H1 (cell line): ENCODE measurements at regions of chr5 and their contacts with region 1.

Region 1: DNA sequence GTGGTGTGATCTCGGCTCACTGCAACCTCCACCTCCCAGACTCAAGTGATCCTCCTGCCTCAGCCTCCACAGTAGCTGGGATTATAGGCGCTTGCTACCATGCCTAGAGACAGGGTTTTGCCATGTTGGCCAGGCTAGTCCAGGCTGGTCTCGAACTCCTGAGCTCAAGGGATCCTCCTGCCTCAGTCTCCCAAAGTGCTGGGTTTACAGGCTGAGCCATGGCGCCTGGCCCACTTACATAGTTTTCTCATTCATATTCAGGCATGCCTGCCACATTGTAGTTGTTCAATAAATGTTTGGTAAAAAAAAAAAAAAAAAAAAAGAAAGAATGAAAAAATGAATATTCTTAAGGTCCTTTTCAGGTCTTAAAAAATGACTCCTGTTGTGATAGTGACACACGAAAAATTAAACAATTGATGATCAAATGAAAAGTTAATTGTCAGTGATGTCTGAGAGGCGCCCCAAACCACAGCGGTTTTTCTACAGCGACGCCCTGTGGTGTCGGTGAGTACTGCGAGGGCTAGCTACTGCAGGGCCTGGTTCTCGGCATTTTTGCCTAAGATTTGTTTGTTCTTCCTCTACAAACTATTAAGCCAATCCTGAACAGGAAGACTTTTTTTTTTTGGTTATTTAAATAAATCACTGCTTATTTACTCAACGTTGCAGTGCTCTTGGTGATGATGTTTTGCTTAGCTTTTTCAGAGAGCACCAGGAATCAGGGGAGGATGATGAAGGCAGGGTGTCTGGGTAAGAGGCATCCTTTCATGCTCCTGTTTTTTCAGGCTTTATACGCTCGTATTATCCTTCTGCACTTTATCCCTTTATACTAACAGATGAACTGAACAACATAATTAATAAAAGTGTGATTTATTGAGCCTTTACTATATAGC is 67.0 kb upstream of the DPYSL3 start:
- DNase-seq: peak in 1 of 2 experiments; percentile 91
- H3K4me3 ChIP-seq: no peak overlapping the region
- H3K27ac ChIP-seq: no peak overlapping the region
- H3K4me1 ChIP-seq: peaks cover 12 to 21% (median 15%) of the 10 kb centered on the region in 4 experiments; a peak in 5 of 7 replicates
- H3K27me3 ChIP-seq: no peaks in the 10 kb centered on the region
- CTCF ChIP-seq: peak; percentile 87 to 90 (median 88)
- EP300 ChIP-seq: no peak
- POLR2A ChIP-seq: no peak
- RAD21 ChIP-seq: peak; percentile 69 to 77

Region 2: DNA sequence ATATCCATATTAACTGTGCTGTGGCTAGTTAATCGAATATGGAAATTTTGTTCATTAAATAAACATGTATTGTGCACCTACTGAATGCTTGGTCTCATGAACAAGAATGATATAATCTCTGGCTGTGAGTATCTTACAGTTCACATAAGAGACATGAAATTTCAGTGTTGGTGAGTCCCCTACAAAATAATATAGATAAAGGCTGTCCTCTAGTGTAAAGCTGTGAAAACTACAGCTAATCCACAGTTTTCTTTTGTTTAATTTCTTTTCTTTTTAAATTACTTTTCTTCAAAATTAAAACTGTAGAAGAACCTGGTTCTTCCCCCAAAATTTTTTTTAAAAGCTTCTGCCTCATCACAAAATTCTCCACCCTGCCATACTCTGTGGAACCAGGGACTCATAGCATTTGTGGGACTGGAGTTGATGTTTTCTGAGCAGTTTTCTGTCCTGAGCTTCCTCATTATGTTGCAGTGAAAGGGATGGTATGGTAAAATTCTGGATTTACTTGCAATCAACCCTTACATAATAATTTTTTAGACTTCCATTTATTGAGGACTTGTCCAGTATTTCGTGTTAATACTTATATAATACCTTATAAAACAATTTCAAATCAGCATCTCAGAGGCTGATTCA is 207.0 kb before region 1 on chr5:
- CTCF ChIA-PET with region 1: interaction called, 12 read pairs
- POLR2A ChIA-PET with region 1: no interaction called
- DNase-seq: no peak
- H3K4me3 ChIP-seq: no peak overlapping the region
- H3K27ac ChIP-seq: no peak overlapping the region
- H3K4me1 ChIP-seq: no peaks in the 10 kb centered on the region
- H3K27me3 ChIP-seq: no peaks in the 10 kb centered on the region
- CTCF ChIP-seq: peak in 2 of 3 experiments; percentile 49 to 51; a peak in 2 of 4 replicates
- EP300 ChIP-seq: no peak
- POLR2A ChIP-seq: no peak
- RAD21 ChIP-seq: peak; percentile 80 to 89

Region 3: GRCh38 chr5:147397616-147398015 is 179.3 kb before region 1 on chr5:
- CTCF ChIA-PET with region 1: interaction called, 10 read pairs
- POLR2A ChIA-PET with region 1: no interaction called
- DNase-seq: no peak
- H3K4me3 ChIP-seq: no peak overlapping the region
- H3K27ac ChIP-seq: no peak overlapping the region
- H3K4me1 ChIP-seq: no peaks in the 10 kb centered on the region
- H3K27me3 ChIP-seq: no peaks in the 10 kb centered on the region
- CTCF ChIP-seq: peak; percentile 28 to 61 (median 54)
- EP300 ChIP-seq: no peak
- POLR2A ChIP-seq: peak in 1 of 2 experiments; percentile 40; a peak in 1 of 3 replicates
- RAD21 ChIP-seq: peak; percentile 14 to 41; a peak in 2 of 4 replicates

Region 4: DNA sequence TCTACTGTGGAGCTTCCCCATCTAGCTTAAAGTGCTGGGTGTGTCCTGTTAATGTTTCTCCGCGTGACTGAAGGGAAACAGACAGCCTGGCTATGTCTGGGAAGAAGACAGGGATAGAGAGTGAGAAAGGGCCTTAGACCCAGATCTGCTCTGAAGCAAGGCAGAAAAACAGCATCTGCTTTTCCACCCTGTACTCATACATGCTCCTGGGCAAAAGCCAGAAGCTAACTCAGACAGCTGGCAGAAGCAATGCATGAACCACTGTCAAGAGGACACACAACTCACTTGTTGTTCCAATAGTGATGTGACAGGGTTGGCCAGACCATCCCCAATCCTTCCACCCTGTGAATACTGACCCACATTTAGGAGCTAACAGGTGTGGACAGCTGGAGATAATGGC is 130.4 kb before region 1 on chr5:
- CTCF ChIA-PET with region 1: interaction called, 23 read pairs
- POLR2A ChIA-PET with region 1: interaction called, 14 read pairs
- DNase-seq: no peak
- H3K4me3 ChIP-seq: no peak overlapping the region
- H3K27ac ChIP-seq: no peak overlapping the region
- H3K4me1 ChIP-seq: peaks cover 8 to 20% (median 19%) of the 10 kb centered on the region in 4 experiments; a peak in 6 of 7 replicates
- H3K27me3 ChIP-seq: no peaks in the 10 kb centered on the region
- CTCF ChIP-seq: no peak
- EP300 ChIP-seq: no peak
- POLR2A ChIP-seq: no peak
- RAD21 ChIP-seq: no peak

Region 5: DNA sequence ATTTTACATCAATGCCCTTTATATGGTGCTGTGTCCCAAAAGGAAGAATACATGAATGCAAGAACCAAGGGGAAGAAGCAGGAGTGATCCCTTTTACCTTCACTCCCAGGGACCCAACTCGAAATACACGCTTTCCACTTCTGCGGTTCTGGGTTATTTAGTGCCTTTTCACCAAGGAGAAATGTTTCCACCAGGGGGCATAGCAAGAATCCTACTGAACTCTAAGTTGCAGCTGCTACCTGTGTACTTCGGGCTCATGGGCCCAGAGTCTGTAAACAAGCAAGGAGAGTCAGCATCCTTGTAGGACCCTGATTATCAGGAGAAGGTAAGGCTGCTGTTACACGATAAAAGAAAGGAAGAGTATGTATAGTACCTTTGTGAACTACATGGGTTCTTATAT is 112.7 kb before region 1 on chr5:
- CTCF ChIA-PET with region 1: interaction called, 51 read pairs
- POLR2A ChIA-PET with region 1: interaction called, 5 read pairs
- DNase-seq: no peak
- H3K4me3 ChIP-seq: no peak overlapping the region
- H3K27ac ChIP-seq: no peak overlapping the region
- H3K4me1 ChIP-seq: peaks cover 3 to 24% (median 13%) of the 10 kb centered on the region in 4 experiments; a peak in 6 of 7 replicates
- H3K27me3 ChIP-seq: no peaks in the 10 kb centered on the region
- CTCF ChIP-seq: peak; percentile 7 to 81 (median 79)
- EP300 ChIP-seq: no peak
- POLR2A ChIP-seq: no peak
- RAD21 ChIP-seq: peak; percentile 69 to 82

Region 6: GRCh38 chr5:147509710-147510651 is 66.9 kb before region 1 on chr5 and contains the start of gene DPYSL3:
- CTCF ChIA-PET with region 1: interaction called, 33 read pairs
- POLR2A ChIA-PET with region 1: interaction called, 3 read pairs
- DNase-seq: peak; percentile 44 to 84
- H3K4me3 ChIP-seq: peak within 1 kb of the TSS; percentile 70 to 96 (median 90)
- H3K27ac ChIP-seq: peak within 1 kb of the TSS; percentile 68; the same call in 1 of the 2 replicates
- H3K4me1 ChIP-seq: peaks cover 3 to 11% (median 5%) of the 10 kb centered on the region in 4 experiments; a peak in 5 of 7 replicates
- H3K27me3 ChIP-seq: peaks cover 2 to 13% (median 12%) of the 10 kb centered on the region in 4 experiments; a peak in 5 of 7 replicates
- CTCF ChIP-seq: peak; percentile 28 to 66 (median 48); a peak in 3 of 4 replicates
- EP300 ChIP-seq: no peak
- POLR2A ChIP-seq: peak in 1 of 2 experiments; percentile 73; a peak in 2 of 3 replicates
- RAD21 ChIP-seq: peak; percentile 40 to 48
- total RNA-seq, gene DPYSL3: 385 and 387 TPM in 2 replicates

Region 7: DNA sequence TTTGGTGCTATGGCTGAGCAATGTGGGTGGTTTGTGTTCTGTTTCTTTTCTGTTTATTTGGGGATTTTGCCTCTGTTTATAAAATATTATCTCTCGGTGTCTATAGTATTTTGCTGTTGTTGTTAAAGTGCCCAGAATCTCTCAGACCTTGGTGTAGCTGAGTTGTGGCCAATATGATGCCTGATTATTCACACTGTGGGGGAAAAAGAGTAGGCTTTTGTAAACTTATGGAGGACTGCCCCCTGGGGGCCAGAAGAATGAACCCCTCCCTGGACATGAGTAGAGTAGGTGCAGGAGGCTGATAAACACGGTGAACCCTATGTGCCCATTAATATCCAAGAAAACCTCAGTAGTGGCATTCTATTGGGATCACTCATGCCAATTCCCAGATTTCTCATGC is 18.1 kb before region 1 on chr5:
- CTCF ChIA-PET with region 1: interaction called, 83 read pairs
- POLR2A ChIA-PET with region 1: interaction called, 17 read pairs
- DNase-seq: peak in 1 of 2 experiments; percentile 74
- H3K4me3 ChIP-seq: no peak overlapping the region
- H3K27ac ChIP-seq: no peak overlapping the region
- H3K4me1 ChIP-seq: peaks cover 5 to 26% (median 15%) of the 10 kb centered on the region in 4 experiments; a peak in 6 of 7 replicates
- H3K27me3 ChIP-seq: no peaks in the 10 kb centered on the region
- CTCF ChIP-seq: peak; percentile 59 to 83 (median 70)
- EP300 ChIP-seq: no peak
- POLR2A ChIP-seq: no peak
- RAD21 ChIP-seq: peak; percentile 86 to 91